ENCODE measurements at regions of chr17 and their contacts with region 1.

Region 1: GRCh38 chr17:3730881-3731429 is 7.3 kb downstream of the HASPIN start:
- DNase-seq: no peak
- H3K4me3 ChIP-seq: no peak overlapping the region
- H3K27ac ChIP-seq: no peak overlapping the region
- H3K4me1 ChIP-seq: 0 out of 2 replicates have a peak, but pooled peaks cover 4% of the 10 kb centered on the region
- H3K27me3 ChIP-seq: no peaks in the 10 kb centered on the region
- CTCF ChIP-seq: no peak

Region 2: DNA sequence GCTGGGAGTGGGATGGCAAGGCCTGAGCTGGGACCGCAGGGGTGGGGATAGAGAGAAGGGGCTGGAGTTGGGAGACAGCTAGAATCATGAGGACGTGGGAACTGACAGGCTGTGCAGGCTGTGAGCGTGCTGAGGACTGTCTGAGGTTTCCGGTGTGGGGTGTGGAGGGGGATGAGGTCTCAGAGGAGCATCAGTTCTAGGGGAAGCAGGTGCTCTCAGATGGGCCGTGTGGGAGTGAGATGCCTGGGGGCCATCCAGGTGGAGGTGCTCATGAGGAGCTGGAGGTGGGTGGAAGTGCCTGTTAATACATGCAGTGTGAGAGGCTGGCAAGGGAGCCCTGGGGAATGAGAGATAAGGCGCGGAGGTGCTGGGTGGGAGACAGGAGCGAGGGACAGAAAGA is 20.0 kb after region 1 on chr17:
- CTCF ChIA-PET with region 1: no interaction called
- POLR2A ChIA-PET with region 1: no interaction called
- intact Hi-C with region 1: no loop called
- DNase-seq: no peak
- H3K4me3 ChIP-seq: no peak overlapping the region
- H3K27ac ChIP-seq: no peak overlapping the region
- H3K4me1 ChIP-seq: peaks cover 8% of the 10 kb centered on the region
- H3K27me3 ChIP-seq: no peaks in the 10 kb centered on the region; the same call in 1 of the 2 replicates
- CTCF ChIP-seq: no peak

Region 3: DNA sequence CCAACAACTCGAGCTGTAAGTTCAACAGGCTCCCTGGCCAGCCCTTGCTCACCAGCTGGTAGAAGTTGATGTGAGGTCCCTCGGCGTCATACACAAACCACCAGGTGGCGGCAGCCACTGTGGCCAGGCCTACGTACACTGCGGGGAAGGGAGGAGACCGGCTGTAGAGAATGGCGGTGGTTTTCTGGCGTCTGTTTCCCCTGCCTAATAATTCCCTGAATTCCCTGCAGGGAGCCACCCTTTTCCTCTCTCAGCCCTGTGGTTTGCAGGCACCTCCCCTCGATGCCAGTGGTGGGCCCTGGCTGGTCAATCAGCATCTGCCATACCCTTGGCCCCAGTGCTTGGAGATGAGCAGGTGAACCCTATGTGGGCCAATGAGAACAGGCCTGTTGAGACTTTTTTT is 204.2 kb after region 1 on chr17:
- CTCF ChIA-PET with region 1: no interaction called
- POLR2A ChIA-PET with region 1: no interaction called
- intact Hi-C with region 1: no loop called
- DNase-seq: peak; percentile 61 to 77
- H3K4me3 ChIP-seq: no peak overlapping the region
- H3K27ac ChIP-seq: no peak overlapping the region
- H3K4me1 ChIP-seq: no peaks in the 10 kb centered on the region
- H3K27me3 ChIP-seq: no peaks in the 10 kb centered on the region
- CTCF ChIP-seq: peak; percentile 78

Region 4: GRCh38 chr17:4130715-4131114 is 399.8 kb after region 1 on chr17:
- CTCF ChIA-PET with region 1: interaction called, 11 read pairs
- POLR2A ChIA-PET with region 1: no interaction called
- intact Hi-C with region 1: no loop called
- DNase-seq: no peak
- H3K4me3 ChIP-seq: no peak overlapping the region
- H3K27ac ChIP-seq: no peak overlapping the region
- H3K4me1 ChIP-seq: no peaks in the 10 kb centered on the region
- H3K27me3 ChIP-seq: no peaks in the 10 kb centered on the region
- CTCF ChIP-seq: no peak

Measured in PC-9 (cell line).